Naive thymus-derived CD4-positive, alpha-beta T cell (primary cell): ENCODE measurements at regions of chr21 and their contacts with region 1.

Region 1: GRCh38 chr21:45542242-45542666 is at the start of gene SLC19A1:
- DNase-seq: peak; percentile 55 to 89 (median 75)
- ATAC-seq: peak; percentile 93
- H3K4me3 ChIP-seq: peak within 1 kb of the TSS; percentile 61
- H3K4me3 Mint-ChIP-seq: peak within 1 kb of the TSS; percentile 66 to 89 (median 78)
- H3K27ac ChIP-seq: peak within 1 kb of the TSS; percentile 80
- H3K27ac Mint-ChIP-seq: peak within 1 kb of the TSS in 7 of 9 donors; percentile 14 to 87 (median 74)
- H3K4me1 ChIP-seq: peaks cover 7 to 15% of the 10 kb centered on the region in 2 donors
- H3K4me1 Mint-ChIP-seq: peaks cover 7 to 18% (median 15%) of the 10 kb centered on the region in 7 donors
- H3K27me3 ChIP-seq: no peaks in the 10 kb centered on the region
- H3K27me3 Mint-ChIP-seq: no peaks in the 10 kb centered on the region
- total RNA-seq, gene SLC19A1: 10.5 to 49.1 (median 21.6) TPM

Region 2: DNA sequence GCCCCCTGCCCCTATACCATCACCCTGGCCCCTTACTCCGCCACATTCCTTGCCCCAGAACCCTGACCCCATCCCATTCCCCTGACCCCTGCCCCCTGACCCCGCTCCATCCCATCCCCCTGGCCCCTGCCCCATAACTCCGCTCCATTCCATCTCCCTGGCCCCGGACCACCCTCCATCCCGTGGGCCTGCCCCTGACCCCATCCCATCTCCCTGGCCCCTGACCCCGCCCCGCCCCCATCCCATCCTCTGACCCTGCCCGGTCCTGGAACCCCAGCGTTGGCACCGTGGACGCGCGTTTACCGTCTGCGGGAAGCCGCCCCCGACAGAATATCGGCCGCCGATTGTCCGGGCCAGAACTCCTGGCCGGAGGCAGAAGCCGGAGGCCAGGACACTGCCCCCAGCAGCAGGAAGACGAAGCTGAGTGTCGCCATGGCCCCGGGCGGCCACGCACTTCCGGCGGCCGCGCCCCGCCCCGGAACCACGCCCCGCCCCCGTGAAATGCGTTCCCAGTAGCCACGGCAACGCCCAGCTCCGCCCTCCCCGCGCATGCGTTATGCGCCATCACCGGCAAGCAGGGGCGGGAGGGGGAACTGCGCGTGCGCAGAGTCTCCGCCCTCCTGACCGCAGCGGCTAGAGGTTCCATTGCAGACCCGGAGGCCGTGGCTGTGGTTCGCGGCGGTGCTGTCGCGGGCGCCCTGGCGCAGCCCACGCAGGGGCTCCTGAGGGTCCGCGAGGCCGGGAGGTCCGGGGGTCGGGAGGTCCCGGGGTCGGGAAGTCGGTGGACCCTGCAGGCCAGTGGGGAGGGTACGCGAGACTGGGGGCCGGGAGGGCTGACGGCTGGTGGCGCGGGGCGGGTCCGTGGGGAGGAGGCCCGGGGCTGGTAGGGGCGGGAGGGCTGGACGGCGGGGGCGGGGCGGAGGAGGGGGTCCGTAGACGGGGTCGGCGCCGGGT is 254.5 kb before region 1 on chr21 and contains the start of gene POFUT2:
- CTCF ChIA-PET with region 1: no interaction called
- POLR2A ChIA-PET with region 1: no interaction called
- intact Hi-C with region 1: loop called (anchors 5 kb)
- DNase-seq: peak; percentile 95 to 100 (median 98)
- ATAC-seq: peak; percentile 91
- H3K4me3 ChIP-seq: peak within 1 kb of the TSS; percentile 68
- H3K4me3 Mint-ChIP-seq: peak within 1 kb of the TSS; percentile 68 to 88 (median 87)
- H3K27ac ChIP-seq: peak within 1 kb of the TSS; percentile 97
- H3K27ac Mint-ChIP-seq: peak within 1 kb of the TSS; percentile 72 to 93 (median 87)
- H3K4me1 ChIP-seq: peaks cover 7 to 16% of the 10 kb centered on the region in 2 donors
- H3K4me1 Mint-ChIP-seq: peaks cover 11 to 46% (median 30%) of the 10 kb centered on the region in 7 donors
- H3K27me3 ChIP-seq: no peaks in the 10 kb centered on the region
- H3K27me3 Mint-ChIP-seq: peaks cover 0 to 10% (median 0%) of the 10 kb centered on the region in 5 donors
- total RNA-seq, gene POFUT2: 20.1 to 53.3 (median 47.8) TPM

Region 3: DNA sequence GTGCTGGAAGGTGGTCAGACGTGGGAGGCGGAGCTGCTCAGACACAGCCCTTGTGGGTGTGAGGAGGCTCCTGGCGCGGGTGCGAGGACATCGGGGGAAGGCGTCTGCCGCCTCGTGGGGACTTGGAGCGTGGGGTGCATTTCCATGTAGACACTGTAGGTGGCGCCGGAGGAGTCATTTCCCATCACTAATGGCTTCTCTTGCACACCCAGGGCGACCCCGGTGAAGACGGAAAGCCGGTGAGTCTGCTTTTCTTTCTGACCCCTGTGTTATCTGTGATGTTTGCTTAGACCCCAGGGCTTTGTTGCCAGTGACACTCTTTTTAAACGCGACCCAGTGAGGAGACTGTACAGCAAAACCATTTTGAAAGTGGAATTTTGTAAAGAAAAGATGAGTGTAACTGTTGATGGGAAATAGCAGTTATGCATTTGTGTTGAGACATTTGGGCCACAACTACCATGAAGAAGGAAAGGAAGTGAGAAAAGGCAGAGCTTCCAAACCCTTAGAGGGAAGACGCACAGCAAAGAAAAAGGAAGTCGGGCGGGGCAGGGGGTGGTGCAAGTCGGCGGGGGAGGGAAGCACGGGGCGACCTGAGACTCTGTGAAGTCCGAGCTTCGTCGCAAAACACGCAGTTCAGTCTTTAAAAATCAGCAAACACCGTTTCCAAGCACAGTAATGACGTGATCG is 64.0 kb before region 1 on chr21:
- CTCF ChIA-PET with region 1: no interaction called
- POLR2A ChIA-PET with region 1: no interaction called
- intact Hi-C with region 1: loop called (anchors 1 to 2 kb)
- DNase-seq: peak; percentile 66 to 88 (median 84)
- ATAC-seq: peak; percentile 88
- H3K4me3 ChIP-seq: peak overlapping the region; percentile 78
- H3K4me3 Mint-ChIP-seq: peak overlapping the region; percentile 78 to 91 (median 84)
- H3K27ac ChIP-seq: peak overlapping the region; percentile 93
- H3K27ac Mint-ChIP-seq: peak overlapping the region; percentile 93 to 100 (median 99)
- H3K4me1 ChIP-seq: peaks cover 14 to 53% of the 10 kb centered on the region in 2 donors
- H3K4me1 Mint-ChIP-seq: peaks cover 27 to 65% (median 43%) of the 10 kb centered on the region in 7 donors
- H3K27me3 ChIP-seq: no peaks in the 10 kb centered on the region
- H3K27me3 Mint-ChIP-seq: no peaks in the 10 kb centered on the region

Region 4: DNA sequence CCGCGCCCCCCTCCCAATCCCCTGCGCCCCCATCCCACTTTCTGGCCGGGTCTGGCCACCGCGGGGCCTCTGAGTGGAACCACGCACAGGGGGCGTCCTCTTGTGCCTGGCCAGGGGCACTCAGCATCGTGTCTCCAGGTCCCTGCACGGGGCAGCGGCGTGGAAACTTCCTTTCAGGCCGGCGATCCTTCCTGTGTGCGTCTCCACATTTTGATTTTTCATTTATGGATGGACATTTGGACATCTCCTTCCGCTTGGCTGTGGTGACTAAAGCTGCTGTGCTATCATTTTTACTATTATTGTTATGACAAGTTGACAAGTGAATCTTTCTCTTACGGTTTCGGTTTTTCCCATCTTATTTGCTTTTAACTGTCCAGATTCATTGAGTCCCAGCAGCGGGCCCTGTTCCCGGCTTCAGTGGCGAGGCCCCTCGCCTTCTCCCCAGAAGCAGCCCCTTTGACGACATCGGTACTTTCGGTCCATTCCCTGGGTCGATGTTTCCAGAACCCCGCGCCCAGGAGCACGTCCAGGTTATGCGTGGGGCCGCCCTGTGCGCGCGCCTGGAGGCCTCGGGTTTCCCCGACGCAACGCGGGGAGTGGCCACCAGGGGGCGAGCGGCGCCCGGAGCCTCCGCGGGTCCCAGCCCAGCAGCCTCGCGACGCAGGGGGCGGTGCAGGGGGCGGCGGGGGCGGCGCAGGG is 12.4 kb after region 1 on chr21:
- CTCF ChIA-PET with region 1: no interaction called
- POLR2A ChIA-PET with region 1: interaction called, 3 read pairs
- intact Hi-C with region 1: loop called (anchors 1 kb)
- DNase-seq: peak; percentile 74 to 99 (median 91)
- ATAC-seq: peak; percentile 93
- H3K4me3 ChIP-seq: peak overlapping the region; percentile 89
- H3K4me3 Mint-ChIP-seq: peak overlapping the region; percentile 92 to 99 (median 96)
- H3K27ac ChIP-seq: peak overlapping the region; percentile 67
- H3K27ac Mint-ChIP-seq: peak overlapping the region; percentile 87 to 99 (median 96)
- H3K4me1 ChIP-seq: peaks cover 24 to 26% of the 10 kb centered on the region in 2 donors
- H3K4me1 Mint-ChIP-seq: peaks cover 22 to 39% (median 28%) of the 10 kb centered on the region in 7 donors
- H3K27me3 ChIP-seq: no peaks in the 10 kb centered on the region
- H3K27me3 Mint-ChIP-seq: no peaks in the 10 kb centered on the region

Region 5: DNA sequence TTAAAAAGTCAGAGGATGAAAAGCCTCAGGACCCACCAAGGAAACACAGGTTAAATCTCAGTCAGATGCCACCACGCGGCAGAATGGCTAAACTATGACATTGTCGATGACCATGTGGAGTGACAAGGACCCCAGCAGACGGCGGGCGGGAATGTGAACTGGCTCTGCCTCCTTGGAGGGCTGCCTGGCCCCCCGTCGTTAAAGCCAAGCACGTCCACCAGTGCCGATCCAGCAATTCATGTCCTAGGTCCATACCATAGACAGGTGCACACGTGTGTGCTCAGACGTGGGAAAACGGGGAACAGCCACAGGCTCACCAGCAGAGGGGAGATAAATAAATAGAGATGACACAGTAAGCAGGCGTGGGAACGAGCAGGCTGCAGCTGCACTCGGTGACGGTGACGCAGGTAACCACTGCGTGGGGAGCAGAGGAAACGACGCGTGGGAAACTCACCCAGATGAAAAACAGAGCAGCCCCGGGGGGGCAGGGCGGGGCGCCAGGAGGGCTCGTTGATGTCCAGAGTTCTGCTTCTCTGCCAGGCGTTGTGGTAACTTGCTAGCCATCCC is 73.0 kb after region 1 on chr21:
- CTCF ChIA-PET with region 1: no interaction called
- POLR2A ChIA-PET with region 1: no interaction called
- intact Hi-C with region 1: loop called in 1 of 2 experiments (anchors 2 kb)
- DNase-seq: peak; percentile 73 to 95 (median 93)
- ATAC-seq: peak; percentile 94
- H3K4me3 ChIP-seq: peak overlapping the region; percentile 45
- H3K4me3 Mint-ChIP-seq: peak overlapping the region; percentile 79 to 95 (median 87)
- H3K27ac ChIP-seq: peak overlapping the region; percentile 95
- H3K27ac Mint-ChIP-seq: peak overlapping the region; percentile 73 to 100 (median 98)
- H3K4me1 ChIP-seq: peaks cover 16 to 41% of the 10 kb centered on the region in 2 donors
- H3K4me1 Mint-ChIP-seq: peaks cover 17 to 58% (median 48%) of the 10 kb centered on the region in 7 donors
- H3K27me3 ChIP-seq: no peaks in the 10 kb centered on the region
- H3K27me3 Mint-ChIP-seq: peaks cover 0 to 34% (median 0%) of the 10 kb centered on the region in 5 donors